A673 (cell line): ENCODE measurements at regions of chr13 and their contacts with region 1.

Region 1: GRCh38 chr13:100514788-100515409 is 73.7 kb downstream of the GGACT start:
- DNase-seq: peak; percentile 94
- H3K4me3 ChIP-seq: peak overlapping the region; percentile 9
- H3K27ac ChIP-seq: peak overlapping the region; percentile 80
- H3K4me1 ChIP-seq: peaks cover 99% of the 10 kb centered on the region
- H3K27me3 ChIP-seq: no peaks in the 10 kb centered on the region
- CTCF ChIP-seq: peak; percentile 98

Region 2: GRCh38 chr13:99916366-99917103 is 598.4 kb before region 1 on chr13:
- CTCF ChIA-PET with region 1: no interaction called
- POLR2A ChIA-PET with region 1: no interaction called
- intact Hi-C with region 1: loop called (anchors 2 kb)
- DNase-seq: peak; percentile 85
- H3K4me3 ChIP-seq: no peak overlapping the region
- H3K27ac ChIP-seq: no peak overlapping the region
- H3K4me1 ChIP-seq: peaks cover 19% of the 10 kb centered on the region
- H3K27me3 ChIP-seq: no peaks in the 10 kb centered on the region
- CTCF ChIP-seq: peak; percentile 99

Region 3: DNA sequence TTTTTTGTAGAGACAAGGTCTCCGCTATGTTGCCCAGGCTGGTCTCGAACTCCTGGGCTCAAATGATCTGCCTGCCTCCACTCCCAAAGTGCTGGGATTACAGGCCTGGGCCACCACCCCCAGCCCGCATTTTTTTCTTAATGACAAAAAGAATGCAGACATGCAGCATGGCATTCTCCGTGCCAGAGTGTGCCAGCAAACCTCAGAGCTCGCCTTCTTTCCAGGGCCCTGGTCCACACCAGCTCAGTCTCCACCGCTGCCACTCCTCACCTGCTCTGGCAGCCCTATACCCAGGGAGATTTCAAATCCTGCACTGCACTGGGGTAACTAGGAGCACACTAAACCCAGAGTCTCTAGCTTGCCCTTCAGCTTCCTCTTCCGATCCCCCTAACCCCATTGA is 585.0 kb before region 1 on chr13:
- CTCF ChIA-PET with region 1: no interaction called
- POLR2A ChIA-PET with region 1: no interaction called
- intact Hi-C with region 1: no loop called
- DNase-seq: no peak
- H3K4me3 ChIP-seq: no peak overlapping the region
- H3K27ac ChIP-seq: no peak overlapping the region
- H3K4me1 ChIP-seq: no peaks in the 10 kb centered on the region
- H3K27me3 ChIP-seq: no peaks in the 10 kb centered on the region
- CTCF ChIP-seq: no peak

Region 4: DNA sequence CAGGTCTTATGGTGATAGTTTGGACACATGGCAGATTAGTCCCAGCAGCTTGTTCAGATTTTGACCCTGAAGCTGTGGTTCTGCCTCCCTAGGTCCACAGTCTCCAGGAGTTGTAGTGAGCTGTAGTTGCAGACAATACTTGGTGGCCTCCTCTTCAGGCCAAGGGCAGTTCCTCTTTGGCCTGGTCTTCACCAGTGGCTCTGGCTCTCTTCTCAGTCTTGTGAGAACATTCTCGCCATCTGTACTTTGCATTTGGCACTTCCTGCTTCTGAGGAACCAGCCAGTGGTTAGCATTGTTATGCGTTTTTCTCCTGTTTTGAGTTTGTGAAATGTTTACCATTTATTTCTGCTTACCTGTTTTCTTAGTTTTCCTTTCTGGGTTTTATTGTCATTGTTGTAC is 385.3 kb before region 1 on chr13:
- CTCF ChIA-PET with region 1: no interaction called
- POLR2A ChIA-PET with region 1: no interaction called
- intact Hi-C with region 1: loop called (anchors 10 kb)
- DNase-seq: no peak
- H3K4me3 ChIP-seq: no peak overlapping the region
- H3K27ac ChIP-seq: no peak overlapping the region
- H3K4me1 ChIP-seq: peaks cover 13% of the 10 kb centered on the region
- H3K27me3 ChIP-seq: no peaks in the 10 kb centered on the region
- CTCF ChIP-seq: no peak

Region 5: GRCh38 chr13:100197591-100198365 is 317.1 kb before region 1 on chr13:
- CTCF ChIA-PET with region 1: no interaction called
- POLR2A ChIA-PET with region 1: no interaction called
- intact Hi-C with region 1: no loop called
- DNase-seq: no peak
- H3K4me3 ChIP-seq: no peak overlapping the region
- H3K27ac ChIP-seq: no peak overlapping the region
- H3K4me1 ChIP-seq: no peaks in the 10 kb centered on the region
- H3K27me3 ChIP-seq: no peaks in the 10 kb centered on the region
- CTCF ChIP-seq: no peak

Region 6: GRCh38 chr13:100392709-100393641 is 121.9 kb before region 1 on chr13:
- CTCF ChIA-PET with region 1: no interaction called
- POLR2A ChIA-PET with region 1: no interaction called
- intact Hi-C with region 1: loop called (anchors 5 kb)
- DNase-seq: peak; percentile 97
- H3K4me3 ChIP-seq: no peak overlapping the region
- H3K27ac ChIP-seq: peak overlapping the region; percentile 72
- H3K4me1 ChIP-seq: peaks cover 49% of the 10 kb centered on the region
- H3K27me3 ChIP-seq: no peaks in the 10 kb centered on the region
- CTCF ChIP-seq: no peak

Region 7: DNA sequence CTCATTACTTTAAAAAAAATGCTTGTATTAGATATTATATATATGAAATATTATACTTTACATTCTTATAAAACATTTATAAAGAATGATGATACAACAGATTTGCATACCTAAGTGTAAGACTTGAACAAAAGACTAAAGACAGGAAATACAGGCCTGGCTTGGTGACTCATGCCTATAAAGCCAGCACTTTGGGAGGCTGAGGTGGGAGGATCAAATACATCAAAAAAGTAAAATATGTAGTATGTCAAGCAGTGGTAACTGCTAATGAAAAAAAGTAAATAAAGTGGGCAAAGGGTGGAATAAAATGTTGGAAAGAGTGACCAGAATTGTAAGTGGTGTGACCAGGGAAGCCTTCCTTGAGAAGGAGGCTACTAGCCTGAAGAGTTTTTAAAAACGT is 60.0 kb before region 1 on chr13:
- CTCF ChIA-PET with region 1: no interaction called
- POLR2A ChIA-PET with region 1: no interaction called
- intact Hi-C with region 1: no loop called
- DNase-seq: peak; percentile 76
- H3K4me3 ChIP-seq: no peak overlapping the region
- H3K27ac ChIP-seq: no peak overlapping the region
- H3K4me1 ChIP-seq: peaks cover 11% of the 10 kb centered on the region
- H3K27me3 ChIP-seq: no peaks in the 10 kb centered on the region
- CTCF ChIP-seq: no peak

Region 8: DNA sequence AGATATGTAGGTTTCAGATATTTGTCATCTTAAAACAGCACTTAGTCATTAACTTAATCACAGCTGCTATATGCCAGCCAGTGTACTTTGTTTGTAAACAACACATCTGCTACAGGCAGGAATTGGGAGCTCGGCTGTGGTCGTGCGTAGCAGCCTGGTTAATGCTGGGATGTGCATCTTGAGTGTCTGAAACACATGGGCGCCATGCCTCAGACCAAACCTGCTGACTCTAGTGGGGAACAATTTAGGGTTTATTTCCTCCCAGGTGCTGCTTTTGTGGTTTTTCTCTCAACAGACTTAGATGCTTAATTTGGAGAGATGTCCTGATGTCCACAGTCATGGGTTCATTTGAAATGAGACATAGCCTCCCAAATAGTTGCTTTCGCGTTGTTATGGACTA is 398.2 kb after region 1 on chr13:
- CTCF ChIA-PET with region 1: no interaction called
- POLR2A ChIA-PET with region 1: no interaction called
- intact Hi-C with region 1: no loop called
- DNase-seq: no peak
- H3K4me3 ChIP-seq: no peak overlapping the region
- H3K27ac ChIP-seq: no peak overlapping the region
- H3K4me1 ChIP-seq: no peaks in the 10 kb centered on the region
- H3K27me3 ChIP-seq: no peaks in the 10 kb centered on the region
- CTCF ChIP-seq: no peak

Region 9: GRCh38 chr13:101127741-101128353 is 612.9 kb after region 1 on chr13:
- CTCF ChIA-PET with region 1: no interaction called
- POLR2A ChIA-PET with region 1: no interaction called
- intact Hi-C with region 1: loop called (anchors 10 kb)
- DNase-seq: peak; percentile 71
- H3K4me3 ChIP-seq: no peak overlapping the region
- H3K27ac ChIP-seq: no peak overlapping the region
- H3K4me1 ChIP-seq: no peaks in the 10 kb centered on the region
- H3K27me3 ChIP-seq: peaks cover 8% of the 10 kb centered on the region
- CTCF ChIP-seq: peak; percentile 86